ENCODE measurements at regions of chr2 and their contacts with region 1.

Region 1: GRCh38 chr2:108786354-108787199 is at the start of gene CCDC138:
- DNase-seq: peak; percentile 94
- H3K4me3 ChIP-seq: peak within 1 kb of the TSS; percentile 86
- H3K27ac ChIP-seq: peak within 1 kb of the TSS; percentile 67
- H3K4me1 ChIP-seq: peaks cover 8% of the 10 kb centered on the region
- CTCF ChIP-seq: 0 out of 2 replicates have a peak, but pooled peaks have one; percentile 14
- total RNA-seq, gene CCDC138: 28.1 and 28.9 TPM in 2 replicates

Region 2: DNA sequence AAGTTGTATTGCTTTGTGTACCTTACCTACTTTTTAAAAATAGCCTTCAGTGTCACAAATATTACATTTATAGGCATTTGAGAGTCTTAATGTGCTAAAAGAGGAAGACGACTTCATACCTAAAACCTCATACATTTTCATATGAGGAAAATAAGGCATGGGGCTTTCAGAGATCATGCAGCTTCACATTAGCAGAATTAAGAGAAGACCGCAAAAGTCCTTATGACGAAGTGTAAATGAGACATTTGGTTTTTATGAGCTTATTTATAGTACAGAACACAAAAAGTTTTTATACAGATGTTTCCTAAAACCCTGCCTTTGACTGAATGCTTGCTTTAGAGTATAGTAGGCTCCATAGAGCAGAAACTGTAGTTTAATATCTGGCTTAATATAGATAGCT is 10.1 kb before region 1 on chr2:
- CTCF ChIA-PET with region 1: no interaction called
- POLR2A ChIA-PET with region 1: interaction called, 12 read pairs
- intact Hi-C with region 1: no loop called
- DNase-seq: peak; percentile 26
- H3K4me3 ChIP-seq: peak overlapping the region; percentile 2
- H3K27ac ChIP-seq: peak overlapping the region; percentile 63
- H3K4me1 ChIP-seq: peaks cover 29% of the 10 kb centered on the region
- CTCF ChIP-seq: no peak

Measured in OCI-LY7 (cell line).